Vagina (tissue), 2 donors: ENCODE measurements at regions of chr11 and their contacts with region 1.

Region 1: GRCh38 chr11:9534791-9535781 is 38.4 kb upstream of the WEE1 start:
- DNase-seq: no peak
- H3K4me3 ChIP-seq: no peak overlapping the region
- H3K27ac ChIP-seq: no peak overlapping the region
- H3K4me1 ChIP-seq: peaks cover 26% of the 10 kb centered on the region
- H3K27me3 ChIP-seq: no peaks in the 10 kb centered on the region
- CTCF ChIP-seq: peak; percentile 47 to 56 (median 50)
- POLR2A ChIP-seq: no peak

Region 2: DNA sequence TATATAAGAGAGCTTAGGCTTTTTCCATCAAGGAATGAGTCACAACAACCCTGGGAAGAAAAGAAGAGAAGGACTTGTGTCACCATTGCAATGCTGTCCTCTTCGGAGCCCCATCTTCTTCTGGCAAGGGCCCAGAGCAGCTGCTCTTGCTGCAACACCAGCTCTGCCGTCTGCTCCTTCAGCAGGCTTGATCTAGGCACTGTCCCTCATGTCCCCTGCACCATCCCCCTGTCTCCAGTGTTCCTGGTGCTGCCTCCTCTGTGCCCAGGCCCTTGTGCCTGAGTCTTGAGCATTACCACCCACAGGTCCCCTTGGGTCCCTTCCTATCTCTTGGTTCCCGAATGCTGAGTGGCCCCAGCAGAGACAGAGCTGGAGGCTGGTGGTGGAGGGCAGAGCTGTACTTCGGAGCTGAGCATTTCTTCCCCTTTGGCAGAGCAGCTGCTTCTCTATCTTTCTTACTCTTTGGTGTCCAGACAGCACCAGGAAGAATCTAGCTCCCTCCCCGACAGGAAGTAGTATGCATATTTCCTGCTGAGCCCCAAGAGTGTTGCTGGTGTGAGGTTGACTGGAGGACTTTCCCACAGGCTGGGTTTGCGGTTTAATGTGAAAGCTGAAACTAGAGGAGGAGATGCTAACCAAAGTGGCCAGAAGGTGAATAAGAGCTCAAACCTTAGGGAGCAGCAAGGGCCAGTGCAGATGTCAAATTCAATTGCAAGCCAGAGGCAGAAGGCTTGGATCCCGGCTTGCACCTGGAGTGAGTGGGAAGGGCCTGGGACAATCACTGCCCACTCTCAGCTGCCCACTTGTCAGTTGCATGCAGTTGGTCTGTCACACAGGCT is 66.2 kb after region 1 on chr11:
- intact Hi-C with region 1: loop called (anchors 10 kb)
- DNase-seq: peak in 1 of 2 donors; percentile 61
- H3K4me3 ChIP-seq: no peak overlapping the region
- H3K27ac ChIP-seq: no peak overlapping the region
- H3K4me1 ChIP-seq: peaks cover 8% of the 10 kb centered on the region
- H3K27me3 ChIP-seq: no peaks in the 10 kb centered on the region
- CTCF ChIP-seq: no peak
- POLR2A ChIP-seq: no peak

Region 3: DNA sequence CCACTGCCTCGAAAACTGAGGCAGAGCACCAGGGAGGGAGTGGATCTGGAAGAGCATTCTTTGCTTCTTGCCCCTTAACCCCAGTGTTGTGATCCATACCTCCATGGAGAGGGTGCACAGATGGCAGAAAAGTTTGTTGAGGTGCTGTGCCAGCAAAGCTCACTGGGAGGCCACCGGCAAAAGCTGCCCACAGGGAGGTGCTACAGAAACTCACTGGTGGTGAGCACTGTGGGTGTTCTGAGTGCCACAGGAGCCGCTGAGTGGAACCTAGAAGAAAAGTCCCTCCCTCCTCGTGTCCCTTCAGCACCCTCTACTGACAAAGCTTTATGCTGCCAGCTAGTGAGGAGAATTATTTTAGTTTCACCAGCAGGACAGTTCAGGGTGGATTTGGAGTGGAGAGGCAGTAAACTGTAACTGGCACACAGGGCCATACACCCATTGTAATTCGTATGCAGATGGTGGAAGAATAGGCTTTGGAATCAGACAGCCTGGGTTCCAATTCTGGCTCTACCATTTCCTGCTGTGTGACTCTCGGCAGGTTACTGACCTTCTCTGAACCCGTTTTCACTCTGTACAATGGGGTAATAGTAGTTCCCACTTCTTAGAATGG is 213.4 kb after region 1 on chr11:
- intact Hi-C with region 1: no loop called
- DNase-seq: no peak
- H3K4me3 ChIP-seq: no peak overlapping the region
- H3K27ac ChIP-seq: peak overlapping the region; percentile 7
- H3K4me1 ChIP-seq: peaks cover 5% of the 10 kb centered on the region
- H3K27me3 ChIP-seq: no peaks in the 10 kb centered on the region
- CTCF ChIP-seq: no peak
- POLR2A ChIP-seq: no peak